BJ (cell line): ENCODE measurements at regions of chr12 and their contacts with region 1.

Region 1: DNA sequence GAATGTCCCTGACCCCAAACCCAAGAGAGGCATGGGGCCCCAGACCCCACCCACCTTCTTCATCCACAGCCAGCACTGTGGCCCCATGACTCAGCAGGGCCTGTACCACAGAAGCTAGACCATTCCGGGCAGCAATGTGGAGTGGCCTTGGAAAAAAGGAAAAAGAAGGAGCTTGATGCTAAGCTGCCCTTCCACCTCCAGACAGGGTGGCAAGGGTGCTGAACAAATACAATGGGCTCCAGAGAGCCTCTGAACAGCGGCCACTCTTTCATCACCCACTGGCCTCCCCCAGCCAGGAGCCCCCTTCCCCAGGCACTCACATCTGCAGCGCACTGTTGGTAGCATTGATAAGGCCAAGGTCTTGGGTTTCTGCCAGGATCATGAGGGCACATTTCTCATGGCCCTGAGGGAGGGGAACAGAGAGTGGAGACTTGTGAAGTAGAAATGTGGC is 13.9 kb downstream of the SLC39A5 start:
- DNase-seq: no peak
- H3K4me3 ChIP-seq: no peak overlapping the region
- H3K27me3 ChIP-seq: no peaks in the 10 kb centered on the region
- CTCF ChIP-seq: no peak

Region 2: GRCh38 chr12:56158029-56158925 is 85.5 kb before region 1 on chr12 and contains the start of gene MYL6:
- CTCF ChIA-PET with region 1: no interaction called
- POLR2A ChIA-PET with region 1: interaction called, 14 read pairs
- DNase-seq: peak; percentile 85
- H3K4me3 ChIP-seq: peak within 1 kb of the TSS; percentile 64
- H3K27me3 ChIP-seq: no peaks in the 10 kb centered on the region
- CTCF ChIP-seq: no peak
- polyA plus RNA-seq, gene MYL6: 5,667 and 6,879 TPM in 2 replicates

Region 3: GRCh38 chr12:56258057-56258819 is 14.5 kb after region 1 on chr12 and contains the start of gene ANKRD52:
- CTCF ChIA-PET with region 1: interaction called, 40 read pairs
- POLR2A ChIA-PET with region 1: no interaction called
- DNase-seq: no peak
- H3K4me3 ChIP-seq: peak within 1 kb of the TSS; percentile 81
- H3K27me3 ChIP-seq: no peaks in the 10 kb centered on the region
- CTCF ChIP-seq: no peak
- polyA plus RNA-seq, gene ANKRD52: 21.0 and 26.8 TPM in 2 replicates